GM23248 (cell line): ENCODE measurements at regions of chr7 and their contacts with region 1.

Region 1: GRCh38 chr7:66033471-66034385 is 41.9 kb upstream of the ASL start:
- DNase-seq: peak; percentile 53
- H3K4me3 ChIP-seq: no peak overlapping the region
- H3K27ac ChIP-seq: no peak overlapping the region
- H3K4me1 ChIP-seq: peaks cover 15% of the 10 kb centered on the region
- H3K27me3 ChIP-seq: no peaks in the 10 kb centered on the region

Region 2: GRCh38 chr7:66125052-66125708 is 91.5 kb after region 1 on chr7:
- in situ Hi-C with region 1: loop called (anchors 10 kb)
- DNase-seq: no peak
- H3K4me3 ChIP-seq: no peak overlapping the region
- H3K27ac ChIP-seq: peak overlapping the region; percentile 63
- H3K4me1 ChIP-seq: peaks cover 19% of the 10 kb centered on the region
- H3K27me3 ChIP-seq: no peaks in the 10 kb centered on the region